PC-3 (cell line): ENCODE measurements at regions of chrX and their contacts with region 1.

Region 1: GRCh38 chrX:106302242-106302662 is 134.1 kb downstream of the PWWP3B start:
- DNase-seq: peak; percentile 94
- ATAC-seq: peak; percentile 67
- H3K4me3 ChIP-seq: no peak overlapping the region
- H3K27ac ChIP-seq: peak overlapping the region; percentile 99
- H3K4me1 ChIP-seq: peaks cover 27% of the 10 kb centered on the region
- H3K27me3 ChIP-seq: no peaks in the 10 kb centered on the region
- CTCF ChIP-seq: no peak

Region 2: GRCh38 chrX:106201502-106202178 is 100.6 kb before region 1 on chrX:
- CTCF ChIA-PET with region 1: no interaction called
- POLR2A ChIA-PET with region 1: no interaction called
- intact Hi-C with region 1: loop called (anchors 10 kb)
- DNase-seq: no peak
- ATAC-seq: no peak
- H3K4me3 ChIP-seq: no peak overlapping the region
- H3K27ac ChIP-seq: no peak overlapping the region
- H3K4me1 ChIP-seq: peaks cover 5% of the 10 kb centered on the region; the same call in 1 of the 2 replicates
- H3K27me3 ChIP-seq: no peaks in the 10 kb centered on the region
- CTCF ChIP-seq: no peak

Region 3: DNA sequence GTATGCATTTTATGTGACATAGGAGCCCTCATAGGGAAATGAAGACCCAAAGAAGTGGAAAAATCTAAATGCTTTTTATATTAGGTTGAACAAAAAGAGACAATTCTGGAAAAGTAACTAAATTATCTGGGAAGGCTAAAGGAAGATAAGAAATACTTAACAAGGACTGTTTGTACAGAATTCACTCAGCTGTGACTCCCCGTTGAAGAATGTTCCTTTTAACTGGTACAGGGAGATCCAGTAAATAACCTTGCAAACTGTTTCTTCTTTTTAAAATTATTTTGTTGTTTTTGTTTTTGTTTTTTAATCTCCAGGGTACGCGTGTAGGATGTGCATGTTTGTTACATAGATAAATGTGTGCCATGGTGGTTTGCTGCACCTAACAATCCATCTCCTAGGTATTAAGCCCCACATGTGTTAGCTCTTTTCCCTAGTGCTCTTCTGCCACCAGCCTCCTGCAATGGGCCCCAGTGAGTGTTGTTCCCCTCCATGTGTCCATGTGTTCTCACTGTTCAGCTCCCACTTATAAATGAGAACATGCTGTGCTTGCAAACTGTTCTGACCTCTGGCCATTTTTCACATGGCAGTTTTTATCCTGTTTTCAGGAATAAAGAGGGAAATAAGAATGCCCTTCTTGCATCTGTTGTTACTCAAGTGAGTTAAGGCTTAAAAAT is 52.4 kb before region 1 on chrX:
- CTCF ChIA-PET with region 1: no interaction called
- POLR2A ChIA-PET with region 1: no interaction called
- intact Hi-C with region 1: loop called (anchors 10 kb)
- DNase-seq: no peak
- ATAC-seq: no peak
- H3K4me3 ChIP-seq: no peak overlapping the region
- H3K27ac ChIP-seq: no peak overlapping the region
- H3K4me1 ChIP-seq: peaks cover 12% of the 10 kb centered on the region
- H3K27me3 ChIP-seq: no peaks in the 10 kb centered on the region
- CTCF ChIP-seq: no peak

Region 4: GRCh38 chrX:106581856-106582255 is 279.6 kb after region 1 on chrX:
- CTCF ChIA-PET with region 1: no interaction called
- POLR2A ChIA-PET with region 1: no interaction called
- intact Hi-C with region 1: no loop called
- DNase-seq: no peak
- ATAC-seq: no peak
- H3K4me3 ChIP-seq: no peak overlapping the region
- H3K27ac ChIP-seq: no peak overlapping the region
- H3K4me1 ChIP-seq: no peaks in the 10 kb centered on the region
- H3K27me3 ChIP-seq: no peaks in the 10 kb centered on the region
- CTCF ChIP-seq: no peak